ENCODE measurements at regions of chr17 and their contacts with region 1.

Region 1: GRCh38 chr17:81142301-81143199 is 22.8 kb upstream of the PVALEF start:
- DNase-seq: peak; percentile 87 to 91 (median 88)
- ATAC-seq: peak; percentile 92
- H3K4me3 ChIP-seq: no peak overlapping the region
- H3K27ac ChIP-seq: no peak overlapping the region
- H3K4me1 ChIP-seq: peaks cover 13% of the 10 kb centered on the region
- H3K27me3 ChIP-seq: no peaks in the 10 kb centered on the region
- CTCF ChIP-seq: peak; percentile 69 to 87 (median 75)
- POLR2A ChIP-seq: no peak

Region 2: DNA sequence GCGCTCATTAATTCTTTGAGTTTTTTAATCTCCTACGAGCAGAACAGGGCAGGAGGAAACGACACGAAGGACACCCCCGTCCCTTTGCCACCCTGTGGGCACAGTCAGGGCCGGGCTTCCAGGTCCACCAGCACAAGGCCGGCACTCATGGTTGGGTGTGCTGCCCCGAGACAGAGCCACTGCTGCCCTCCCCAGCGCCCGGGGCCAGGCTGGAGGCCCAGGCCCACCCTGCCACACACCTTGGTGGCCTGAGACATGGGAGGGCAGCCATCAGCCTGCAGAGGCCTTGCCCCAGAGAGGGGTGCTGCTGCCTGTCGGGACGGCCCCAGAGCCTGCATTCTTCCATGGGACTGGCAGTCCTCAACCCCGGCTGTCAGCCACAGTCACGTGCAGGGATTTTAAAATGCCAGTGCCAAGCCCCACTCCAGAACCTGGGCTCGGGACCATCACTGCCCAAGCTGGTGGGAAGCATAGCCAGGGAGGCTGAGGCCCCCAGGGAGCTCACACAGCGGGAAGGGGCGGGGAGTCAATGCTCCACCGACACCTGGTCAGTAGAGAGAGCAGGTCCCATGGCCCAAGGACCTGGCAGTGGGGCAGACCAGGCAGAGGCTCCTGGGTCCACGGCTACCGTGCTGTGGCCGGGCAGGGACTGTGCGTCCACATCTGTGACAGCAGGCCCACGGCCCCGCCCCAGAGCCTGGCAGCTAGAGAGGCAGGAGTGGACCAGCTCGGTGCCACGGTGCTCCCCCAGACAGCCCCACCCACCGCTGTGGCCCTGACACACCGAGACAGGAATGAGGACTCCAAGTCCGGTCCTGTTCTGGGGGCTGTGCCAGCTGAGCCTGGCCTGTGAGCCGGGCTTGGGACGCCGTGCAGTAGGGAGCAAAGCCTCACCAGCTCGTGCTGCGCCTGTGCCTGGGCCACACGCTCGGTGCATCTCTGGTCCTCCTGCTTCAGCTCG is 52.7 kb after region 1 on chr17:
- intact Hi-C with region 1: loop called (anchors 5 kb)
- DNase-seq: no peak
- ATAC-seq: no peak
- H3K4me3 ChIP-seq: no peak overlapping the region
- H3K27ac ChIP-seq: no peak overlapping the region
- H3K4me1 ChIP-seq: peaks cover under 1% of the 10 kb centered on the region
- H3K27me3 ChIP-seq: no peaks in the 10 kb centered on the region
- CTCF ChIP-seq: no peak
- POLR2A ChIP-seq: no peak

Region 3: GRCh38 chr17:81238817-81239600 is 96.5 kb after region 1 on chr17 and contains the starts of genes NDUFAF8 and TEPSIN:
- intact Hi-C with region 1: loop called (anchors 10 kb)
- DNase-seq: peak; percentile 97 to 99 (median 99)
- ATAC-seq: peak; percentile 98
- H3K4me3 ChIP-seq: peak within 1 kb of the TSS; percentile 85 to 87
- H3K27ac ChIP-seq: peak within 1 kb of the TSS; percentile 46 to 86 (median 76)
- H3K4me1 ChIP-seq: peaks cover 32% of the 10 kb centered on the region
- H3K27me3 ChIP-seq: no peaks in the 10 kb centered on the region
- CTCF ChIP-seq: peak in 2 of 7 experiments; percentile 8 to 26
- POLR2A ChIP-seq: peak in 2 of 3 donors; percentile 68 to 76
- total RNA-seq, gene NDUFAF8: 20.8 to 26.5 TPM
- total RNA-seq, gene TEPSIN: 31.9 to 102 TPM